ENCODE measurements at regions of chr1 and their contacts with region 1.

Region 1: DNA sequence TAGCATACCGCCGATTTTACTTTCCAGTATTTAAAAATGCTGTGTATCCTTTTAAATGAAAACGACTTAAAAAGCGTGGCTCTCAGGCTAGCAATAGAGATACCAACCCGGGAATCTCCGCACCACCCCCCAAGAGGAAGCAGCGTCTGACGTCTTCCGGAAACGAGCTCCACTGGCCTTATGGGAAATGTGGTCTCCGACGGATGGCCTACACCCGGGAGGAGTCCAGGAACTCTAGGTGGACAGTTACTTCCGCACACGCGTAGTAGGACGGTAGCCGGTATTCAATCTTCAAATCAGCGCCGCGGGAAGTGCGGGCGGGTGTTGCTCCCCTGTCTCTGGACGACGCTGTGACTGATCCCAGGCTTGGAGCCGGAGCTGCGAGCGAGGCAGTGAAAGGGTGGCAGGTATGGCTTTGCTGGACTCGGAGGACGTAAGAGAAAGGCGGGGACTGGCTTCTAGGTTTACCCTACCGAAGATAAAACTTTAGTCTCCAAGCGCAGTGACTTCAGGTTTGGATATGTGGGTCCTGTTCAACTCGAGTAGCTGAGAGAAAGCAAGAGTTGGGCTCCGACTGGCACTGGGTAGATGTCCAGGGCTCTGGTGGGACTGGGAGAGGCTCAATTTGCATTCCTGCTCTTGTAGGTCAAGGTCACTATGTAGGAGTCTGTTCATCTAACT is at the start of gene ZNF684:
- DNase-seq: peak; percentile 92
- H3K4me3 ChIP-seq: peak within 1 kb of the TSS; percentile 59 to 84 (median 82)
- H3K27ac ChIP-seq: peak within 1 kb of the TSS; percentile 96
- H3K4me1 ChIP-seq: peaks cover 7% of the 10 kb centered on the region
- H3K27me3 ChIP-seq: peaks cover 0 to 2% of the 10 kb centered on the region in 2 experiments
- CTCF ChIP-seq: no peak
- POLR2A ChIP-seq: no peak
- total RNA-seq, gene ZNF684: 5.5 and 5.8 TPM in 2 replicates

Region 2: DNA sequence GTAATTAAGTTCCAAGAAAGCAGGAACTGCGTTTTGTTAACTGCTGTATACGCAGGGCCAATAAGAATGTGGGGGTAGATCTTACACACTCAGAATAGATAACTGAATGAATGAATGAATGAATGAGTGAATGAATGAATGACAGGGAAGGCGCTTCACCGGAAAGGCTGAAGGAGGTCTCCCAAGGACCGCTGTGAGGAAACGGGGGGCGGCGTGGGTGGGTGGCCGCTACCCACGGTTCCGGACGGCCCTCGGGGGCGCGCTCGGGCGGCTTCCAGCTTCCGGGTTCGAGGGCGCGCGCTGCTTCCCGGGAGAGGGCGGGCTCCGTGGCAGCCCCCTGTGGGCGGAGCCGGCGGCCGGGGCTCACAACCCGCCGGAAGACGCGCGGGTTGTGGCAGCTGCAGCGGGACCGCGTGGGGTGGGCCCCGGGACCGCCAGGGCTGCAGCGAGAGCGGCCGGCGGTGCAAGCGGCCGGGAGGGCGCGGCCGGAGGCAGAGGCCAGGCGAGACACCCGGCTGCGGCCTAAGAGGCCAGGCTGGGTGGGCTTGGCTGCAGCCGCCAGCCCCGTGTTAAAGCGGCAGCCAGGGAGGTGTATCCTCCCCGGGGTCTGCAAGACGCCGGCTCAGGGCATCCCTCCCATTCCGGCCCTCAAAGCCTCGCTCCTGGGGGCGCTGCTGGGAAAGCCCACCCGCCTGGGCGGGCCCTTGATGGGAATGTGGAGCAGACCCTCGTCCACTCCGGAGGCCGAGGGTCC is 54.4 kb before region 1 on chr1 and contains the start of gene ZFP69:
- CTCF ChIA-PET with region 1: interaction called, 18 read pairs
- POLR2A ChIA-PET with region 1: no interaction called
- dilution Hi-C with region 1: no loop called
- intact Hi-C with region 1: loop called (anchors 1 kb)
- DNase-seq: peak; percentile 52
- H3K4me3 ChIP-seq: peak within 1 kb of the TSS; percentile 40 to 95 (median 95)
- H3K27ac ChIP-seq: peak within 1 kb of the TSS; percentile 28
- H3K4me1 ChIP-seq: peaks cover 12% of the 10 kb centered on the region
- H3K27me3 ChIP-seq: no peaks in the 10 kb centered on the region
- CTCF ChIP-seq: no peak
- POLR2A ChIP-seq: peak; percentile 72
- total RNA-seq, gene ZFP69: 2.4 and 3.2 TPM in 2 replicates

Region 3: DNA sequence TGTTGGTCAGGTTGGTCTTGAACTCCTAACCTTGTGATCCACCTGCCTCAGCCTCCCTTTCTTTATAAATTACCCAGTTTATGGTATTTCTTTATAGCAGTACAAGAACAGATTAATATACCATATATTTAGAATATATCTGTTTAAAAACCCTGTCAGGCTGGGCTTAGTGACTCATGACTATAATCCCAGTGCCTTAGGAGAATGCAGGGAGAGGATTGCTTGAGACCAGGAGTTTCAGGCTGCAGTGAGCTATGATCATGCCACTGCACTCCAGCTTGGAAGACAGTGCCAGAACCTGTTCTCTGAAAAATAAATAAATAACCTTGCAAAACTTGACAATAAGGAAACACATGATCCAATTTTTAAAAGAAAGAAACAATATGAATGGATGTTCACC is 43.8 kb after region 1 on chr1:
- CTCF ChIA-PET with region 1: interaction called, 9 read pairs
- POLR2A ChIA-PET with region 1: no interaction called
- dilution Hi-C with region 1: no loop called
- intact Hi-C with region 1: loop called (anchors 1 kb)
- DNase-seq: no peak
- H3K4me3 ChIP-seq: no peak overlapping the region
- H3K27ac ChIP-seq: no peak overlapping the region
- H3K4me1 ChIP-seq: peaks cover 5% of the 10 kb centered on the region
- H3K27me3 ChIP-seq: no peaks in the 10 kb centered on the region
- CTCF ChIP-seq: no peak
- POLR2A ChIP-seq: no peak

Region 4: GRCh38 chr1:40592107-40592803 is 60.7 kb after region 1 on chr1:
- CTCF ChIA-PET with region 1: interaction called, 12 read pairs
- POLR2A ChIA-PET with region 1: no interaction called
- dilution Hi-C with region 1: no loop called
- intact Hi-C with region 1: no loop called
- DNase-seq: peak; percentile 47
- H3K4me3 ChIP-seq: no peak overlapping the region
- H3K27ac ChIP-seq: no peak overlapping the region
- H3K4me1 ChIP-seq: no peaks in the 10 kb centered on the region
- H3K27me3 ChIP-seq: peaks cover 0 to 4% of the 10 kb centered on the region in 2 experiments
- CTCF ChIP-seq: peak; percentile 19 to 48
- POLR2A ChIP-seq: no peak

Region 5: GRCh38 chr1:40638097-40639036 is 106.8 kb after region 1 on chr1:
- CTCF ChIA-PET with region 1: no interaction called
- POLR2A ChIA-PET with region 1: no interaction called
- dilution Hi-C with region 1: no loop called
- intact Hi-C with region 1: no loop called
- DNase-seq: no peak
- H3K4me3 ChIP-seq: no peak overlapping the region
- H3K27ac ChIP-seq: no peak overlapping the region
- H3K4me1 ChIP-seq: no peaks in the 10 kb centered on the region
- H3K27me3 ChIP-seq: peaks cover 0 to 2% of the 10 kb centered on the region in 2 experiments
- CTCF ChIP-seq: no peak
- POLR2A ChIP-seq: no peak

Region 6: DNA sequence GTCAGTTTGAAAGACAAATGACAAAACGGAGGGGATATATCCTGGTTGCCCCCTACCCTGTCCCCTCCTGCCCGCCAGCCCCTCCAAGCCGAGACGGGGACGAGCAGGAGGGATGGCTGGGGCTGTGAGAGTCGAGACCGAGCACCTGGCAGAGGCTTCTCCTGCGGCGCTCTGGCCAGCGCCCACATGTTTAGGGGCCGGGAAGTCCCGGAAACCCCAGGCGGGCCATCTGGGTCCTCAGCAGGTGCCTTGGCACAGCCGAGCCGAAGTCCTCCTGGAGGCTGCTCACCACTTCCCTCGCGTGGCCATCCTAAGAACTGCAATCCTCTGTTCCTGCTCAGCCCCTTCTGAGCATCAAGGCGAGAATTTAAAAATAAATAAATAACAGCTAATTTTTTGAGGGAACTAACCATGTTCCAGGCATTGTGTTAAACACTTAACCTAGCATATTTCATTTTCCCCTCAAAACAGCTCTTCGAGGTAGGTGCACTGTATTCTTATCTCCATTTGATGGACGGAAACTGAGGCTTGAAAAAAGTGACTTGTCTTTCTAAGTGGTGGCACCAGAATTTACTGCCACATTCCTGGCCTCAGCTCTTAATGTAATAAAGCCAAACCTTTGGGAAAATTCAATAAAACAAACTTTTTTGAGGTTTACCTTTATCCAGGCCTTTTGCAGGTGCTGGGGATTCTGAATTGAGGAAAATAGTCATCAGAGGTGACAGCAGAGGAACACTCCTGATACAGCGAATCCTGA is 137.4 kb after region 1 on chr1:
- CTCF ChIA-PET with region 1: interaction called, 6 read pairs
- POLR2A ChIA-PET with region 1: no interaction called
- dilution Hi-C with region 1: no loop called
- intact Hi-C with region 1: loop called (anchors 1 kb)
- DNase-seq: peak; percentile 78
- H3K4me3 ChIP-seq: no peak overlapping the region
- H3K27ac ChIP-seq: no peak overlapping the region
- H3K4me1 ChIP-seq: no peaks in the 10 kb centered on the region
- H3K27me3 ChIP-seq: peaks cover 16 to 20% of the 10 kb centered on the region in 2 experiments
- CTCF ChIP-seq: peak; percentile 87 to 91
- POLR2A ChIP-seq: no peak

Region 7: DNA sequence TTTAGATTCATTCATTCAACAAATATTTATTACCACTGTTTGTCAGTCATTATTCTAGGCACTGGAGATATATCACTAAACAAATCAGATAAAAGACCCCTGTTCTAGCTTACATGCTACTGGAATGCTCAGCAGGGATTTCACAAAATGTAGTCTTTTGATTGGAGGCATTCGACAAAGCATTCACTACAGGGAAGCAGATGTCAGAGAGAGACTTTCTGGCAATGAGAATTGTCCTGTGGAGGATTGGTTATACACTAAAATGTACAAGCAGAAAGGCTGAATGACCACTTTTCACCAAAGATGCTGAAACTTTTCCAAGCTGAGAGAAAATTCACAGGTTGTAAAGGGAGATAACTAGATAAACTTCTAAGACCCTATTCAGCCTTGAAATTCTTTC is 652.9 kb after region 1 on chr1:
- CTCF ChIA-PET with region 1: no interaction called
- POLR2A ChIA-PET with region 1: no interaction called
- dilution Hi-C with region 1: no loop called
- intact Hi-C with region 1: no loop called
- DNase-seq: no peak
- H3K4me3 ChIP-seq: no peak overlapping the region
- H3K27ac ChIP-seq: no peak overlapping the region
- H3K4me1 ChIP-seq: no peaks in the 10 kb centered on the region
- H3K27me3 ChIP-seq: no peaks in the 10 kb centered on the region
- CTCF ChIP-seq: no peak
- POLR2A ChIP-seq: no peak

Measured in endothelial cell of umbilical vein (primary cell).